Activated CD8-positive, alpha-beta T cell treated with anti-CD3 and anti-CD28 coated beads, Interleukin-2, amount 10 ng/mL, durations not matched to agents 7 days and 5 days (primary cell): ENCODE measurements at regions of chr17 and their contacts with region 1.

Region 1: GRCh38 chr17:57552114-57552624 is 192.9 kb downstream of the CCDC182 start:
- DNase-seq: peak; percentile 51
- ATAC-seq: peak; percentile 49
- H3K4me3 Mint-ChIP-seq: no peak overlapping the region
- H3K27ac Mint-ChIP-seq: peak overlapping the region; percentile 9
- H3K4me1 Mint-ChIP-seq: peaks cover 33% of the 10 kb centered on the region
- H3K27me3 Mint-ChIP-seq: no peaks in the 10 kb centered on the region

Region 2: DNA sequence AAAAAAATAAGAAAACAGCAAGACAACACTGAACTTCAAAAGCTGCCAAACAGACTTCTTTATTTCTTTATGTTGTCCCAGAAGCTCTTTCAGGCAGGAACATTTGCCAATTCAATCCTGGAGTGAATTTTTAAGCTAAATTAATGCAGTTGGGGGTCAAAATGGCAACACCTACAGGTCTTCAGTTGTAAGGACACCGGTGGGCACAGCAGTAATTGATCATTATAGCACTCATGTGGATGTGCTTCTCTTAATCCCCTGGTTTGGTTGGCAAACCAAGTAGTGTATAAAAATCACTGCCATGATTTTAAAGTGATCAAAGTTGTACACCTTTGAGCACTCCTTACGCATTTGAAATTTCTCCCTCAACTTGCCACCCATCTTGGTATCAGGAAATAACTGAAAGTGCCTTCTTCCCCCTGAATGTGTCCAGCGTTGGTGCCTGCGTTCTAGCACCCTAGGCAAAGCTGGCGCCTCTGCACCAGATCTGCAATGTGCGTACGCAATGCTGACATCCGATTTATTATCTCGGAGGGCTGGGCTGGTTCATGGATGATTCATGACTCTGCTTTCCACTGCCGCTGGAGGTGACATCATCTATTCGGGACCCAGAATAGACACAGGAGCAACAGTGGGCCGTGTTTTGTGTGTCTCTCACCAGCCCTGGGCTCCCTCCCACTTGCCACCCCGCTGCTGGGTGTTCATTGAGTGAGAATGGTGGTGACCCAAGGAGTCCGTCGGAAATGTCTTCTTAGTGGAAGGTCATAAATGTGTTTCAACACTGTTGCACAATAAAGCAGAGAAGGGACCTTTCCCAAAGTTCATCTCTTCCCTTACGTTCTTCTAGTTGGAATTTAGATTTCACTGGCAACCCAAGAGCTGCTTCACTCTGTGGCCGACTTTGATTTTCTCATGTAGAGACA is 10.4 kb before region 1 on chr17:
- CTCF ChIA-PET with region 1: interaction called, 14 read pairs
- POLR2A ChIA-PET with region 1: no interaction called
- DNase-seq: no peak
- ATAC-seq: no peak
- H3K4me3 Mint-ChIP-seq: no peak overlapping the region
- H3K27ac Mint-ChIP-seq: no peak overlapping the region
- H3K4me1 Mint-ChIP-seq: peaks cover 18% of the 10 kb centered on the region
- H3K27me3 Mint-ChIP-seq: no peaks in the 10 kb centered on the region